Heart right ventricle (tissue), 16 donors: ENCODE measurements at regions of chr17 and their contacts with region 1.

Region 1: DNA sequence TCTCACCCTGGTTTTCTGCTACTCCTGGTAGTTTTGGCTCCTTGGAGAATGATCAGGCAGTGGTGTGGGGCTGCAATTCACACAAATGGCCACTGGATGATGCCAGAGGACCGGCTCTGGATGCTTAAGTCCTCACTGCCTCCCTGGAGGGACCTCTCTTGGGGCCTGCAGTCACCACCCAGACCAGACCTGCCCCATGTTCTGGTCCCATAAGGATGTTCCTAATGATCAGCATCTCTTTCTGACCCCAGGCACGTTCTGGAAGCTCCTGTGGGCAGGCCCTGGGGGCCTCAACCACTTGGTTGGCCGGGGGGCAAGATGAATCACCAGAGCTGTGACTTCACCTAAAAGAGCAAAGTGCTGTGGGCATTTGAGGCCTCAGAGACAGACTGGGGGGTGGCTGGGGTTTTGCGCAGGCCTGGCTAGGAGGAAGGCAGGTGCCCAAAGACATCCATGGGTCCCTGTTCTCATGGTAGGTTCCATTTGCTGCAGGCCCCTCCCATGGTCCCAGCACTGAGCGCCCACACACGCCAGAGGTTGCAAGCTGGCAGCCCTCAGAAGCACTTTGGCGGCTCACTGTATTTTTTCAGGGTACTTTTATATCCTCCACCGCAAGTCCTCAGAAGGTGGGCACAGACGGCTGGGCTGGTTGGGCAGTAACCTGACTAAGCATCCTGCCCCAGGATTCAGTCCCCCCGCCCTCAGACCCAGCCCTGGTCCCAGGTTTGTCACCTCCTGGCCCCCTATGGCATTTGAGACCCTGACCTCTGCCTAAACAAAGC is 53.2 kb downstream of the NT5M start:
- DNase-seq: peak; percentile 73 to 79
- ATAC-seq: peak; percentile 63 to 90 (median 77)
- H3K4me3 ChIP-seq: no peak overlapping the region
- H3K27ac ChIP-seq: no peak overlapping the region
- H3K4me1 ChIP-seq: peaks cover 9 to 26% (median 16%) of the 10 kb centered on the region in 9 donors
- H3K27me3 ChIP-seq: no peaks in the 10 kb centered on the region
- CTCF ChIP-seq: peak in 8 of 9 donors; percentile 93 to 100 (median 99)

Region 2: GRCh38 chr17:17440010-17440843 is 83.9 kb after region 1 on chr17:
- intact Hi-C with region 1: loop called in 2 of 10 experiments (anchors 5 to 10 kb)
- DNase-seq: peak; percentile 31 to 63
- ATAC-seq: peak in 6 of 8 donors; percentile 12 to 83 (median 59)
- H3K4me3 ChIP-seq: no peak overlapping the region
- H3K27ac ChIP-seq: no peak overlapping the region
- H3K4me1 ChIP-seq: peaks cover 0 to 10% (median 3%) of the 10 kb centered on the region in 9 donors
- H3K27me3 ChIP-seq: no peaks in the 10 kb centered on the region
- CTCF ChIP-seq: peak; percentile 32 to 70 (median 60)

Region 3: GRCh38 chr17:17613708-17614114 is 257.4 kb after region 1 on chr17:
- intact Hi-C with region 1: loop called in 2 of 10 experiments (anchors 10 kb)
- DNase-seq: peak in 1 of 2 donors; percentile 65
- ATAC-seq: peak; percentile 71 to 93 (median 88)
- H3K4me3 ChIP-seq: no peak overlapping the region
- H3K27ac ChIP-seq: no peak overlapping the region
- H3K4me1 ChIP-seq: peaks cover 0 to 15% (median 5%) of the 10 kb centered on the region in 9 donors
- H3K27me3 ChIP-seq: no peaks in the 10 kb centered on the region
- CTCF ChIP-seq: peak; percentile 35 to 76 (median 71)

Region 4: DNA sequence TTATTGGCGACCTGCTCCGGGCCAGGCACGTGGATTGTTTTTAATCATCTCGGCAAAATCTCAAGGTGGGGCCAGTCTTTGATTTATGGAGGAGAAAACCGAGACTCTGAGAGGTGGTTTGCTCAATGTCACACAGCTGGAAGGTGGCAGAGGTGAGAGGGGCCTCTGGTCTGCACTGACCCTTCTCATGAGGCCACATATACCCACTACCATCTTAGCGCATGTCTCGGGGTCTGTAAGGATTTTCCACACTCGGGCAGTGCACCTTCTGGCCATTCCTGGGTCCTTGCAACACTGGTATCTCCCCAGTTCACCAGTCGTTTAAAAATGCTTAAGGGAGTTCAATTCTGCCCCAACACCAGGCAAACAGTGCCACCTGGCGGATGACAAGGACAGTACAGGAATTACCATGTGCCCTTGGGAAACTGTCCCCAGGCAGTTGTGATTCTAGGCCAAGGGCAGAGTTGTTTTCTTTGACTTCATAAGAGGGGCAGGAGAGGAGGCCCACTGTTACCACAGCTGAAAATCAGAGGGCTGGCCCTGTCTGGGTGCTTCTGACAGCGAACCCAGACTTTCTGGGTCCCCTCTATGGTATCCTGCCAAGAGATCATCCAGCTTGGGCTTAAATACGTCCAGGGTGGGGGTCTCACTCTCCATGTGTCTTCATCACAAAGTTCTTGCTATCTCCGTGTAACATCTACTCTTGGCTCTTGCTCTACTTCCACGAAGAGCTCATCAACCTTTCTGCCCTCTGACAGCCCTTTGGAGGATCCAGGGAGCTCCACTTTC is 285.5 kb after region 1 on chr17:
- intact Hi-C with region 1: loop called (anchors 1 to 5 kb)
- DNase-seq: peak; percentile 72 to 85
- ATAC-seq: peak; percentile 80 to 94 (median 87)
- H3K4me3 ChIP-seq: no peak overlapping the region
- H3K27ac ChIP-seq: peak overlapping the region in 1 of 10 donors; percentile 31
- H3K4me1 ChIP-seq: peaks cover 0 to 14% (median 0%) of the 10 kb centered on the region in 9 donors
- H3K27me3 ChIP-seq: peaks cover 0 to 6% (median 0%) of the 10 kb centered on the region in 7 donors
- CTCF ChIP-seq: peak; percentile 81 to 94 (median 89)